Activated CD4-positive, alpha-beta T cell treated with anti-CD3 and anti-CD28 coated beads for 36 hours (primary cell): ENCODE measurements at regions of chr17 and their contacts with region 1.

Region 1: GRCh38 chr17:40615295-40615988 is 32.2 kb downstream of the SMARCE1 start:
- DNase-seq: peak; percentile 64
- ATAC-seq: peak; percentile 35
- H3K4me3 Mint-ChIP-seq: peak overlapping the region; percentile 54
- H3K27ac Mint-ChIP-seq: peak overlapping the region; percentile 91
- H3K4me1 Mint-ChIP-seq: peaks cover 77% of the 10 kb centered on the region
- H3K27me3 Mint-ChIP-seq: no peaks in the 10 kb centered on the region

Region 2: GRCh38 chr17:40564883-40565768 is 50.3 kb before region 1 on chr17 and contains the start of gene CCR7:
- CTCF ChIA-PET with region 1: interaction called, 149 read pairs
- POLR2A ChIA-PET with region 1: interaction called, 170 read pairs
- intact Hi-C with region 1: loop called (anchors 1 kb)
- DNase-seq: peak; percentile 92
- ATAC-seq: peak; percentile 28
- H3K4me3 Mint-ChIP-seq: peak within 1 kb of the TSS; percentile 94
- H3K27ac Mint-ChIP-seq: peak within 1 kb of the TSS; percentile 98
- H3K4me1 Mint-ChIP-seq: peaks cover 48% of the 10 kb centered on the region
- H3K27me3 Mint-ChIP-seq: no peaks in the 10 kb centered on the region
- total RNA-seq, gene CCR7: 325 to 389 TPM

Region 3: DNA sequence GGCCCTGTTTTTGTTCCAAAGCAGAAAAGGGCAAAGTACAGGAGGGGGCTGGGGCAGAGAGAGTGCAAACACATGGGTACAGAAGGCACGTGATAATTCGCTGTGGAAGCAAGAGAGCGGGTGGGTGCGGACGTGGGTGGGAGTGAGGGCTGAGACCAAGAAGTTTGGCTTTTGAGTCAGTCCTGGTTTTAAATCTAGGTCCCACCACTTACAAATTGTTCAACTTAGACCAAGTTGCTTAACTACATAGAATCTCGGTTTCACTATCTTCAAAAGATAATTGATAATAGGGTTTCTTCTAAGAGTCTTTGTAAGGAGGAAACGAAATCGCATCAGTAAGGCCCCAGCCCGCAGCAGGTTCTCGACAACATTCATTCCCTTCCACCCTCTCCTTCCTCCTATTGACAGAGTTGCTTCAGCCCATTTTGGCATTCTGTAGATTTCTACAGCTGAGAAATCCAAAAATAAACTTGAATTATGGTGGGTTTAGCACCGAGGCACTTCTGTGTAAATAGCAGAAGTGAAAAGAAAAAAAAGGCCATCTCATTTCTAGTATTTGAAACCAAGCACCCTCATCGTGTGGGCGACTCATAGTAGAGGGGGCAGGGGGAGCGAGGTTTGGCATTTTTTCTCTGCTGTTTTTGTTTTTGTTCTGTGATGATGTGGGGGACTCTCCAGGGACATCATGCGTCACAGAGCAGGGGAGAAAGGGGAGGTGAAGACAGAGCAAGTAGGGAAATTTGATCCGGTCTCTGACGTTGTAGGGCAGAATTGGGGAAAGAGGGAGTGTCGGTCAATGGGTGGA is 16.6 kb before region 1 on chr17:
- CTCF ChIA-PET with region 1: interaction called, 32 read pairs
- POLR2A ChIA-PET with region 1: interaction called, 40 read pairs
- intact Hi-C with region 1: loop called in 1 of 2 experiments (anchors 1 kb)
- DNase-seq: peak; percentile 93
- ATAC-seq: peak; percentile 57
- H3K4me3 Mint-ChIP-seq: peak overlapping the region; percentile 65
- H3K27ac Mint-ChIP-seq: peak overlapping the region; percentile 97
- H3K4me1 Mint-ChIP-seq: peaks cover 97% of the 10 kb centered on the region
- H3K27me3 Mint-ChIP-seq: no peaks in the 10 kb centered on the region

Region 4: DNA sequence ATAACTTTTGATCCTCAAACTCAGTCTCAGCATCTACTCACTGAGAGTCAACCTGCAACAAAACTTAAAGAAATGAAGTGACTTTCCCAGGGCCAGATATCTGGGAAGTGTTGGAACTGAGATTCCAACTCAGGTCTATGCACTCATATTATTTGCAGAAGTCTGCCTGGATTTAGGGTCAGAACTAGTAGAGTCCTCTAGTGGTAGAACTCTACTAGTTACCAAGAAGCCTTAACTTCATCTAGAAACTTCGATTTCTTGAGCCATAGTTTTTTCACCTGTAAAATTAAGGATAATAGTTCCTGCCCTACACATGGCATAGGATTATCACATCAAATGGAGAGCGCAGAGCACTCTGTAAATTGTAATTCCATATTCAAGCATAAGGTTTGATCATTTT is 111.5 kb after region 1 on chr17:
- CTCF ChIA-PET with region 1: interaction called, 3 read pairs
- POLR2A ChIA-PET with region 1: no interaction called
- intact Hi-C with region 1: loop called (anchors 1 to 2 kb)
- DNase-seq: no peak
- ATAC-seq: no peak
- H3K4me3 Mint-ChIP-seq: no peak overlapping the region
- H3K27ac Mint-ChIP-seq: no peak overlapping the region
- H3K4me1 Mint-ChIP-seq: peaks cover 2% of the 10 kb centered on the region
- H3K27me3 Mint-ChIP-seq: peaks cover 19% of the 10 kb centered on the region

Region 5: DNA sequence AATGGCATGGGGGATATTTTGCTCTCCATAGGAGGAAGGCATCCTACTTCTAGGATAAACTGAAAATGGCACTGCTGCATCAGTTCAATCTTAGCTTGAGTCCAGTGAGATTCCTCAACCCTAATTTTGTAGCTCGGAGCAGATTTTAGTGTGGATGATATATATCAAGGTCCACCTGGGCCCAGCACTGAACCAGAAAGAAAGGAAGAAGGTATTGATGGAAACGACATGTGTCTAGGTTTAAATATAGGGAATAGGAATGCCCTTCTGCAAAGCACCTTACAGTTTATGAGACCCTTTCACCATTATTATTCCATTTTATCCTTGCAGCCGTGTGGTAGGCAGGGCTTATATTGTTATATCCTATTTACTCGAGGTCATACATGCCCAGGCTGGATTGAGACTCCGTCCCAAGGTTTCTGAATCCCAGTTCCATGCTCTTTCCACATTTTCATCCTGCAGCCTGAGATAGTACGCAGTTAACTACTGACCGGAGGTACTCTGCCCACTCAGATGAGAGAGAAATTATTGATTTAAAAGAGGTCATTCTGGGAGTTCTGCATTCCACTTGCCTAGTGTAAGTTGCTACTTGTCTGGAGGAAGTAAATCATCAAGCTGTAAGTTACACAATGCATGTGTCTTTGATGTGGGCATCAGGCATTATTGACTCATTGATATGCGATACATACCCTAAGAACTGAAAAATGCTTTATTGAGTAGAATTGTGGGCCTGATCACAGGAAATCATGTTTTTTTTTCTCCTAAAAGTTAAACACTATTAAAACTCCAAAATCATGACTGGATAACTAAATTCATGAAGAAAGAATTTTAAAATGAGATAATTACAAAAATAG is 341.2 kb after region 1 on chr17:
- CTCF ChIA-PET with region 1: no interaction called
- POLR2A ChIA-PET with region 1: no interaction called
- intact Hi-C with region 1: no loop called
- DNase-seq: no peak
- ATAC-seq: no peak
- H3K4me3 Mint-ChIP-seq: no peak overlapping the region
- H3K27ac Mint-ChIP-seq: no peak overlapping the region
- H3K4me1 Mint-ChIP-seq: peaks cover 2% of the 10 kb centered on the region
- H3K27me3 Mint-ChIP-seq: peaks cover 12% of the 10 kb centered on the region

Region 6: GRCh38 chr17:41403798-41404671 is 788.6 kb after region 1 on chr17:
- CTCF ChIA-PET with region 1: no interaction called
- POLR2A ChIA-PET with region 1: no interaction called
- intact Hi-C with region 1: loop called in 1 of 2 experiments (anchors 10 kb)
- DNase-seq: peak; percentile 80
- ATAC-seq: peak; percentile 91
- H3K4me3 Mint-ChIP-seq: peak overlapping the region; percentile 10
- H3K27ac Mint-ChIP-seq: peak overlapping the region; percentile 87
- H3K4me1 Mint-ChIP-seq: peaks cover 37% of the 10 kb centered on the region
- H3K27me3 Mint-ChIP-seq: peaks cover 2% of the 10 kb centered on the region